ENCODE measurements at regions of chr18 and their contacts with region 1.

Region 1: GRCh38 chr18:48834413-48835031 is 116.2 kb downstream of the SMAD7 start:
- DNase-seq: peak in 7 of 9 donors; percentile 20 to 72 (median 34)
- ATAC-seq: peak; percentile 87
- H3K4me3 ChIP-seq: peak overlapping the region; percentile 46
- H3K4me3 Mint-ChIP-seq: peak overlapping the region; percentile 72 to 92 (median 79)
- H3K27ac ChIP-seq: no peak overlapping the region
- H3K27ac Mint-ChIP-seq: peak overlapping the region; percentile 19 to 98 (median 73)
- H3K4me1 ChIP-seq: peaks cover 59 to 93% of the 10 kb centered on the region in 2 donors
- H3K4me1 Mint-ChIP-seq: peaks cover 53 to 85% (median 65%) of the 10 kb centered on the region in 7 donors
- H3K27me3 ChIP-seq: no peaks in the 10 kb centered on the region
- H3K27me3 Mint-ChIP-seq: no peaks in the 10 kb centered on the region

Region 2: GRCh38 chr18:48813833-48814489 is 20.6 kb before region 1 on chr18:
- CTCF ChIA-PET with region 1: interaction called, 3 read pairs
- POLR2A ChIA-PET with region 1: interaction called, 3 read pairs
- intact Hi-C with region 1: loop called (anchors 1 to 2 kb)
- DNase-seq: peak in 5 of 9 donors; percentile 6 to 43 (median 24)
- ATAC-seq: peak; percentile 77
- H3K4me3 ChIP-seq: no peak overlapping the region
- H3K4me3 Mint-ChIP-seq: peak overlapping the region in 7 of 10 donors; percentile 7 to 41 (median 15)
- H3K27ac ChIP-seq: peak overlapping the region; percentile 14
- H3K27ac Mint-ChIP-seq: peak overlapping the region in 8 of 9 donors; percentile 47 to 88 (median 72)
- H3K4me1 ChIP-seq: peaks cover 0 to 29% of the 10 kb centered on the region in 2 donors
- H3K4me1 Mint-ChIP-seq: peaks cover 12 to 48% (median 22%) of the 10 kb centered on the region in 7 donors
- H3K27me3 ChIP-seq: no peaks in the 10 kb centered on the region
- H3K27me3 Mint-ChIP-seq: peaks cover 0 to 2% (median 0%) of the 10 kb centered on the region in 5 donors

Region 3: GRCh38 chr18:48868468-48869466 is 34.2 kb after region 1 on chr18:
- CTCF ChIA-PET with region 1: no interaction called
- POLR2A ChIA-PET with region 1: no interaction called
- intact Hi-C with region 1: loop called in 1 of 2 experiments (anchors 5 kb)
- DNase-seq: peak in 1 of 9 donors; percentile 65
- ATAC-seq: peak; percentile 79
- H3K4me3 ChIP-seq: no peak overlapping the region
- H3K4me3 Mint-ChIP-seq: peak overlapping the region in 1 of 10 donors; percentile 62
- H3K27ac ChIP-seq: no peak overlapping the region
- H3K27ac Mint-ChIP-seq: peak overlapping the region in 3 of 9 donors; percentile 55 to 88 (median 62)
- H3K4me1 ChIP-seq: peaks cover 0 to 41% of the 10 kb centered on the region in 2 donors
- H3K4me1 Mint-ChIP-seq: peaks cover 7 to 28% (median 11%) of the 10 kb centered on the region in 7 donors
- H3K27me3 ChIP-seq: no peaks in the 10 kb centered on the region
- H3K27me3 Mint-ChIP-seq: no peaks in the 10 kb centered on the region

Region 4: DNA sequence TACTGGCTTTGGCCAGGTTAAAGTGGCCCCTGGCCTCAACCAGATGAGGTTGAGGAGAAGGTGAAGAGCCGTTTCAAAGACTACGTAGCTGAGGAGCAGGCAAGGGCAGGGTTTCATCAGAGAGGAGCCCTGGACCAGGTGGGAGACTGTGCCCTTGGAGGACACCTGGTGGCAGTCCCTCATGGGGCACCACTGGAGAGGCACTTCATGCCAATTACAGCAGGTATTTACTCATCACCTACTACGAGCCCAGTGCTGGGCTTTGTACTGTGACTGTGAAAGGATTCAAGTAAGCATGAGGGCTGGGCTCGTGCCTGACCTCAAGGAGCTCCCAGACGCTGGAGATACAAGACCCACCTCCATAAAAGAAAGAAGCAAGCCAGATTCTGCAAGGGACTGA is 78.7 kb after region 1 on chr18:
- CTCF ChIA-PET with region 1: no interaction called
- POLR2A ChIA-PET with region 1: no interaction called
- intact Hi-C with region 1: loop called in 1 of 2 experiments (anchors 5 kb)
- DNase-seq: peak in 4 of 9 donors; percentile 32 to 51 (median 44)
- ATAC-seq: peak; percentile 78
- H3K4me3 ChIP-seq: no peak overlapping the region
- H3K4me3 Mint-ChIP-seq: no peak overlapping the region
- H3K27ac ChIP-seq: no peak overlapping the region
- H3K27ac Mint-ChIP-seq: peak overlapping the region in 2 of 9 donors; percentile 28 to 55
- H3K4me1 ChIP-seq: peaks cover 11 to 19% of the 10 kb centered on the region in 2 donors
- H3K4me1 Mint-ChIP-seq: peaks cover 22 to 43% (median 33%) of the 10 kb centered on the region in 7 donors
- H3K27me3 ChIP-seq: no peaks in the 10 kb centered on the region
- H3K27me3 Mint-ChIP-seq: peaks cover 0 to 1% (median 0%) of the 10 kb centered on the region in 5 donors

Region 5: DNA sequence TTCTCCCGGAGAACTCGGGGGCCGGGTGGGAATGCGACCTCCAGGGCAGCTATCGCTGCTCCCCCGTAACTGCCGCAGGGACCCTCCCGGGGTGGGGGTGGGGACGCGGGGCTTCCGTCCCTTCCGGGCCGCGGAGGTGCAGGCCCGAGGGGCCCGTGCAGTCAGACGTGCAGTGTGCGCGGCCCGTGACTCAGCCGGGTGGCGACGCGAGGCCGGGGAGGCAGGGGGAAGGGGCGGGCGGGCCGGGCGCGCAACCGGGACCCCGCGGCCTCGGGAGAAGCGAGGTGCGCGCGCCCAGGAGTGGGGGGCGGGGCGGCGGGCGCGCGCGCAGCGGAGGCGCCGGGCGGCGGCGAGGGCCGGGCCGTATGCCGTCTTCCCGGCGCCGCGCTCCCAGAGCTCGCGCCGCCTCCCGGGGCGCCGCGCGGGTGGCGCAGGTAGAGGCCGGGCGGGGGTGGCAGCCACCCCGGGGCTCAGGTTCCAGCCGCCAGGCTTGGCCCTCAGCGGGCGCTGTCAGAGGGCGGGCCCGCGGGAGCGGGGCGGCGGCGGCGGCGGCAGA is 141.2 kb after region 1 on chr18:
- CTCF ChIA-PET with region 1: no interaction called
- POLR2A ChIA-PET with region 1: no interaction called
- intact Hi-C with region 1: loop called in 1 of 2 experiments (anchors 2 kb)
- DNase-seq: peak in 8 of 9 donors; percentile 29 to 66 (median 38)
- ATAC-seq: peak; percentile 79
- H3K4me3 ChIP-seq: peak overlapping the region; percentile 50
- H3K4me3 Mint-ChIP-seq: peak overlapping the region in 7 of 10 donors; percentile 35 to 83 (median 59)
- H3K27ac ChIP-seq: no peak overlapping the region
- H3K27ac Mint-ChIP-seq: no peak overlapping the region
- H3K4me1 ChIP-seq: no peaks in the 10 kb centered on the region
- H3K4me1 Mint-ChIP-seq: peaks cover 0 to 16% (median 11%) of the 10 kb centered on the region in 7 donors
- H3K27me3 ChIP-seq: no peaks in the 10 kb centered on the region
- H3K27me3 Mint-ChIP-seq: peaks cover 8 to 65% (median 18%) of the 10 kb centered on the region in 5 donors

Region 6: DNA sequence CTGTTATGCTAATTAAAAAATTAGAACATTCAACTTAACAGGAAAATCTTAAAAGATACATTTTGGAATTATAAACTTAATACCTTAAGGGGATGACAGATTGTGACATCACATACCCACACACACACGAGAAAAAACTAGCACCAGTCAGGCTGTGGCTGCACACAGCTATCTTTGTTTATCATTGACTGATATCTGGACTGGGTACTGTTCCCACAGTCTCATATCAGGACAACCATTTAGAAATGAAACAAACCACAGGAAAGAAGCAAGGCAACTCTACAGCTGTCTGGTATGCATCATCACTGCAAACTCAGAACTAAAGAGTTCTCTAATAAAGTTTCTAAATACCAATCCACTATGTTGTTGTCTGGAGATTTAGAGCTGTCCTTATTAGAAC is 327.1 kb after region 1 on chr18:
- CTCF ChIA-PET with region 1: no interaction called
- POLR2A ChIA-PET with region 1: no interaction called
- intact Hi-C with region 1: no loop called
- DNase-seq: peak in 1 of 9 donors; percentile 25
- ATAC-seq: peak; percentile 58
- H3K4me3 ChIP-seq: no peak overlapping the region
- H3K4me3 Mint-ChIP-seq: no peak overlapping the region
- H3K27ac ChIP-seq: no peak overlapping the region
- H3K27ac Mint-ChIP-seq: no peak overlapping the region
- H3K4me1 ChIP-seq: no peaks in the 10 kb centered on the region
- H3K4me1 Mint-ChIP-seq: peaks cover 0 to 13% (median 0%) of the 10 kb centered on the region in 7 donors
- H3K27me3 ChIP-seq: no peaks in the 10 kb centered on the region
- H3K27me3 Mint-ChIP-seq: no peaks in the 10 kb centered on the region

Measured in naive thymus-derived CD4-positive, alpha-beta T cell (primary cell).